ENCODE measurements at regions of chr1 and their contacts with region 1.

Region 1: DNA sequence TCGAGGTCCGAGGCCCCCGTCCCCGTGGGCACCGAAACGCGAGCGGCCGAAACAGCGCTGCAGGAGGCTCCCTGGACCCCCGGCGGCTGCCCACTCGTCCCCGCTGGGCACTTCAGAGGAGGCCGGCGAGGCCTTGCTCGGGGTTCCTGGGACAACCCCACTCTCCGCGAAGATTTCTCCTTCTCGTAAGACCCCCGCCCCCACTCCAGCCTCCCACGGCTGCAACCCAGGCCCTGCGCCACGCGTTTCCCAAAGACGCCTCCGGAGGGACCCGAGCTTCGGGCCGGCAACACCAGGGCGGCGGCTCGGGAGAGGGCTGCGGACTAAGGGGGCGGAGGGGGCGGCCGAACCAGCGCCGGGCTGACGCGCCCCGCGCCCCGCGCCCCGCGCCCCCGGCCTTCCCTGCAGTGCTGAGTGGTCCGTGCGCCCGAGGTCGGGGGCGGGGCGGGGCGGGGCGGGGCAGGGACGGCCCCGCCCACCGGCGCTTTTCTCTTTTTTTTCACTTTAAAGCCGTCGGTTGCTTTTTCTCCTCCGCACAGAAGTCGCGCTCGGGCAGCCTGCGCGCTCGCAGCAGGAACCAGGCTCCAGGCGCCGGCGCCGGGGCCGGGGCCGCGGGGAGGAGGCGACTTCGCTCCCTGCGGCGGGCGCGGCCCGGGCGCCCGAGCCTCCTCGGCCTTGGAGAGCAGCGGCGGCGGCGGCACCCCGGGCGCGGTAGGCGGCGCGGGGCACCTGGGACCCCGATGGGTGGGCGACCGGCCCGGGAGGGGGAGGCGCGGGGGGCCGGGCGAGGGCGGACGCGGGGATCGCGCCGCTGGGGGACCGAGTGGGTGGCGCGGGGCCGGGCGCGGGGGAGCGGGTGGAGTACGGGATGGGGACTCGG is at the start of gene SPSB1:
- DNase-seq: no peak
- H3K4me3 ChIP-seq: peak within 1 kb of the TSS; percentile 83
- CTCF ChIP-seq: no peak

Region 2: DNA sequence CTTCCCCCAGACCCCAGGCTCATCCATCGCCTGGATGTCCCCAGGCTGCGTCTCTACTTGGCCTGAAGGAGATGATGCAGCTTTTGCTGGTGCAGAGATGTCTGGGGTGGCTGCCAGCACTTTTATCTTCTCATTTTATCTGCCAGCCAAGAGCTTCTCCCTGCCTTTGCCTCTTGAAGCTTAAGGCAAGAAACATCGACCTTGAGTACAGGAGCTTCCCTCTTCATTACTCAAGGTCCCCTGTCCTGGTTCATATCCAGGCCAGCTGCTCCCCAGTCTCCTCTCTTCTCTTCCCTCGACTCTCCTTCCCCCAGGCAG is 67.2 kb before region 1 on chr1:
- CTCF ChIA-PET with region 1: no interaction called
- POLR2A ChIA-PET with region 1: no interaction called
- DNase-seq: no peak
- H3K4me3 ChIP-seq: no peak overlapping the region
- CTCF ChIP-seq: no peak

Region 3: DNA sequence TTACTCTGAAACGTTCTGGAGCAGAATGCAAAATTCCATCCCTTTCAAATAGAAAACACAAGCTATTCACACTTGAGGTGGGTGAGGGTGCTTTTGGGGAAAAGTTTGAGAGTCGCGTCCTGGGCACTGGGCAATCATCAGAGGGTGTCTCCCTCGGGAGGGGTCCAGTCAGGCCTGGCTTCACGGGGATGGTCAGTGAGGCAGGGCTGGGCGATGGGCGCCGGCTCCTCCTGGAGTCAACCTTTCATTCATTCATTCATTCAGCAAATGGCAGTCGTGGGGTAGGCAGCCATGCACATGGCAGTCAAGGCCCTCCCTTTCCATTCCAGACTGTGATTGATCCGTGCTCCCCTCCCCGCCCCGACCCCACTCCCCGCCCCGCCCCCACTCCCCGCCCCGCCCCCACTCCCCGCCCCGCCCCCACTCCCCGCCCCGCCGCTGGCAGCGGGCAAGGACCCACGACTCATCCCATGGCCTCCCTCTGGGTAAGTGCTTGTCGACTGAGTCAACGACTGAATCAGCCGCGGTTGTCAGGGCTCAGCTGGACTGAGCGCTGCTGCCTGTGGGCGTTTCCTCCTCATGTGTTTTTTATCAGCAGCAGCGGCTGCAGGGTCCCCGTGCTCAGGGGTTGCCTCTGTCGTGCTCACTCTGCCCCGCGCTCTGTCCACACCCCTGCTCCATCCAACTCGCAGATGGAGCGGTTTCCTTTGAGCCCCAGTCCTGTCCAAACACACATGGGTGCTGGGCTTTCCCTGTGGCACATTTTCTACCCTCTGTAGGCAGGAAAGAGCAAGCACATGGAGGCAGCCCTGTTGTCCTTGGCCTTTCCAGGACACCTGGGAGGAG is 12.4 kb before region 1 on chr1:
- CTCF ChIA-PET with region 1: interaction called, 24 read pairs
- POLR2A ChIA-PET with region 1: interaction called, 8 read pairs
- DNase-seq: no peak
- H3K4me3 ChIP-seq: peak overlapping the region; percentile 20
- CTCF ChIP-seq: no peak

Region 4: DNA sequence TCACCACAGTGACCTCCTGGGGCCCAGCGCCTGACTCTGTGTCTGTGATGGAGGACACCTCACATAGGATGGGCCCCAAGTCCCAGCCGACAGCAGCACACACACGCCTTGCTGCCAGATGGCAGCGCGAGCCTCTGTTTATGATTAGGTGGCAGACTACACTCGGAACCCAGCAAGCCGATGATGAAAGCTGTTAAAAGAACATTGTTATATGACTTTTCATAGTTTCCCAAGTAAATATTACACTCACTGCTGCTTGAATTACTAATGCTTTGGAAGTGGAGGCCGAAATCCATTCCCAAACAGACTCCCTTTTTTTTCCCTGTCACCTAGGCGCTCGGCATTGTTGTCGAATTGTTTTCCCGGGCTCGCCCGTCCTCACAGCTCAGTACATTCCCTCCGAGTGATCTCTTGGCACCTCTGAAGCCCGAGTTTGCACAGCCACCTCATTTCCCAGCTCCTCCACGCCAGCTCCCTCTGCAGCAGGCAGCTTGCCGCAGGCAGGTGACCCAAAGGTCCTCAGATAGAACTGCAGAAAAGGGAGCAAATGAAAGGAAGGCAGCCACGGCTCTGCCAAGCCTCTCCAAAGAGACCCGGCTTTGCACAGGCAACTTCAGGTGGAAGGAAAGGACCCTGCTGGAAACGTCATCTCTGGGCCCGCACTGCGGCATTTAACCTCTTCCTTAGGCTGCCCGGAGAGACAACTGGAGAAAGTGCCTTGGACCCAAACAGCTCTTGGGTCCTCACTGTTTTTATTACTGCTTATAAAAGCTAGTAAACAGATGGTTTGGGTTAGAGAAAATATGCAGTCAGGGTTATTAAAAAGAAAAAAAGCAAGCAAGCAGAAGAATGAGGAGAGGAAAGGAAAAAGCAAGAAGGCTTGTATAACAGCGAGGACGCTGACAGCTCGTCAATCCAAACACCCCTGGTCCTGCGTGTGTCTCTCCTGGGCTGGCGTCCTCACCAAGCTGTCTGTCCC is 174.5 kb after region 1 on chr1:
- CTCF ChIA-PET with region 1: interaction called, 34 read pairs
- POLR2A ChIA-PET with region 1: no interaction called
- DNase-seq: no peak
- H3K4me3 ChIP-seq: no peak overlapping the region; the same call in 1 of the 2 replicates
- CTCF ChIP-seq: no peak

Region 5: DNA sequence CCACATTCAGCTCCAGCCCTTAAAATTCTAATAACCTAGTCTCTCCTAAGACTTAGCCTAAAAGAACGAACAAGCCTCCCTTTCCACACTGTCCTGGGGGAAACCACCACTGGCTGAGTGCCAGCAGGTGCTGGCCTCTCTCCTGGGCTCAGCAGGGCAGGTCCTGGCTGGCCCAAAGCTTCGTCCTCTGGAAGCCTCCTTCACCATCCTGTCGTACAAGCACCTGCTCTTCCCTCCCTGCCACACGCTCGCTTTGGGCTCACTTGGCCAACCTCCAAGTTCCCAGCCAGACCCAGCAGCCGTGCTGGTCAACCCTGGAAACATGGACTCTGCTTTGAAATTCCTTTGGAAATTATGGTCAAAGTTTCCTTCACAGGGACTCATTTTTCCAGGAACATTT is 188.4 kb after region 1 on chr1:
- CTCF ChIA-PET with region 1: interaction called, 11 read pairs
- POLR2A ChIA-PET with region 1: no interaction called
- DNase-seq: no peak
- H3K4me3 ChIP-seq: no peak overlapping the region
- CTCF ChIP-seq: no peak

Measured in AG04449 (cell line).